HCT116 (cell line): ENCODE measurements at regions of chr1 and their contacts with region 1.

Region 1: GRCh38 chr1:8878448-8879347 is at the start of gene ENO1:
- DNase-seq: peak; percentile 93
- ATAC-seq: peak; percentile 76
- H3K4me3 ChIP-seq: peak within 1 kb of the TSS; percentile 88 to 95
- H3K27ac ChIP-seq: peak within 1 kb of the TSS; percentile 99
- H3K4me1 ChIP-seq: peaks cover 43 to 63% of the 10 kb centered on the region in 2 experiments
- H3K27me3 ChIP-seq: no peaks in the 10 kb centered on the region
- CTCF ChIP-seq: no peak
- POLR2A ChIP-seq: peak; percentile 92
- RAD21 ChIP-seq: no peak
- total RNA-seq, gene ENO1: 2,334 TPM

Region 2: GRCh38 chr1:8506995-8507615 is 371.6 kb before region 1 on chr1:
- CTCF ChIA-PET with region 1: no interaction called
- POLR2A ChIA-PET with region 1: no interaction called
- RAD21 ChIA-PET with region 1: no interaction called
- intact Hi-C with region 1: no loop called
- DNase-seq: no peak
- ATAC-seq: no peak
- H3K4me3 ChIP-seq: no peak overlapping the region
- H3K27ac ChIP-seq: no peak overlapping the region
- H3K4me1 ChIP-seq: no peaks in the 10 kb centered on the region
- H3K27me3 ChIP-seq: no peaks in the 10 kb centered on the region
- CTCF ChIP-seq: no peak
- POLR2A ChIP-seq: no peak
- RAD21 ChIP-seq: no peak

Region 3: GRCh38 chr1:8889925-8890785 is 11.5 kb after region 1 on chr1:
- CTCF ChIA-PET with region 1: no interaction called
- POLR2A ChIA-PET with region 1: interaction called, 11 read pairs
- RAD21 ChIA-PET with region 1: interaction called in 1 of 2 experiments, 3 read pairs
- intact Hi-C with region 1: no loop called
- DNase-seq: peak; percentile 81
- ATAC-seq: peak; percentile 89
- H3K4me3 ChIP-seq: peak overlapping the region; percentile 11 to 50
- H3K27ac ChIP-seq: peak overlapping the region; percentile 82
- H3K4me1 ChIP-seq: peaks cover 23 to 26% of the 10 kb centered on the region in 2 experiments
- H3K27me3 ChIP-seq: no peaks in the 10 kb centered on the region
- CTCF ChIP-seq: no peak
- POLR2A ChIP-seq: no peak
- RAD21 ChIP-seq: no peak

Region 4: GRCh38 chr1:8903410-8903809 is 24.7 kb after region 1 on chr1:
- CTCF ChIA-PET with region 1: interaction called, 4 read pairs
- POLR2A ChIA-PET with region 1: interaction called, 10 read pairs
- RAD21 ChIA-PET with region 1: no interaction called
- intact Hi-C with region 1: loop called (anchors 1 kb)
- DNase-seq: no peak
- ATAC-seq: peak; percentile 23
- H3K4me3 ChIP-seq: peak overlapping the region in 1 of 2 experiments; percentile 3; a peak in 1 of 4 replicates
- H3K27ac ChIP-seq: peak overlapping the region; percentile 60
- H3K4me1 ChIP-seq: peaks cover 64 to 71% of the 10 kb centered on the region in 2 experiments
- H3K27me3 ChIP-seq: no peaks in the 10 kb centered on the region
- CTCF ChIP-seq: no peak
- POLR2A ChIP-seq: no peak
- RAD21 ChIP-seq: peak; percentile 63